A673 (cell line): ENCODE measurements at regions of chr16 and their contacts with region 1.

Region 1: DNA sequence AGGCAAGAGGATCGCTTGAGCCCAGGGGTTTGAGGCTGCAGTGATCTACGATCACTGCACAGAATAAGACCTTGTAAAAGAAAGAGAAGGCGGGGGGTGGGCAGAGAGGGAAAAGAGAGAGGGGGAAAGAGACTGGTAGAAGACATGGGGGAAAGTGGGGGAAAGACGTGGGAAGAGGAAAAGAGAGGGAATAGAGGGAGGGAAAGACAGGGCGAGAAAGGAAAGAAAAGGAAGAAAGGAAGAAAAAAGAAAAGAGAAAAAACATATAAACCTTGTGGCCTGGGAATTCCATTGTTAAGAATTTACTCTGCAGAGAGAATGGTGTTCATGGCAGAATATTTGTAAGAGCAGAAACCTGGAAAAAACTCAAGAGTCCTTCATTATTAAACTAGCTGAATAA is 120.4 kb downstream of the RMI2 start:
- DNase-seq: no peak
- H3K4me3 ChIP-seq: no peak overlapping the region
- H3K27ac ChIP-seq: no peak overlapping the region
- H3K4me1 ChIP-seq: no peaks in the 10 kb centered on the region
- H3K27me3 ChIP-seq: peaks cover 23% of the 10 kb centered on the region
- CTCF ChIP-seq: no peak

Region 2: GRCh38 chr16:12907670-12908233 is 1442.1 kb after region 1 on chr16:
- CTCF ChIA-PET with region 1: no interaction called
- POLR2A ChIA-PET with region 1: interaction called, 21 read pairs
- intact Hi-C with region 1: no loop called
- DNase-seq: no peak
- H3K4me3 ChIP-seq: no peak overlapping the region
- H3K27ac ChIP-seq: no peak overlapping the region
- H3K4me1 ChIP-seq: no peaks in the 10 kb centered on the region
- H3K27me3 ChIP-seq: peaks cover 19% of the 10 kb centered on the region
- CTCF ChIP-seq: 0 out of 2 replicates have a peak, but pooled peaks have one; percentile 16